BJ (cell line): ENCODE measurements at regions of chr12 and their contacts with region 1.

Region 1: DNA sequence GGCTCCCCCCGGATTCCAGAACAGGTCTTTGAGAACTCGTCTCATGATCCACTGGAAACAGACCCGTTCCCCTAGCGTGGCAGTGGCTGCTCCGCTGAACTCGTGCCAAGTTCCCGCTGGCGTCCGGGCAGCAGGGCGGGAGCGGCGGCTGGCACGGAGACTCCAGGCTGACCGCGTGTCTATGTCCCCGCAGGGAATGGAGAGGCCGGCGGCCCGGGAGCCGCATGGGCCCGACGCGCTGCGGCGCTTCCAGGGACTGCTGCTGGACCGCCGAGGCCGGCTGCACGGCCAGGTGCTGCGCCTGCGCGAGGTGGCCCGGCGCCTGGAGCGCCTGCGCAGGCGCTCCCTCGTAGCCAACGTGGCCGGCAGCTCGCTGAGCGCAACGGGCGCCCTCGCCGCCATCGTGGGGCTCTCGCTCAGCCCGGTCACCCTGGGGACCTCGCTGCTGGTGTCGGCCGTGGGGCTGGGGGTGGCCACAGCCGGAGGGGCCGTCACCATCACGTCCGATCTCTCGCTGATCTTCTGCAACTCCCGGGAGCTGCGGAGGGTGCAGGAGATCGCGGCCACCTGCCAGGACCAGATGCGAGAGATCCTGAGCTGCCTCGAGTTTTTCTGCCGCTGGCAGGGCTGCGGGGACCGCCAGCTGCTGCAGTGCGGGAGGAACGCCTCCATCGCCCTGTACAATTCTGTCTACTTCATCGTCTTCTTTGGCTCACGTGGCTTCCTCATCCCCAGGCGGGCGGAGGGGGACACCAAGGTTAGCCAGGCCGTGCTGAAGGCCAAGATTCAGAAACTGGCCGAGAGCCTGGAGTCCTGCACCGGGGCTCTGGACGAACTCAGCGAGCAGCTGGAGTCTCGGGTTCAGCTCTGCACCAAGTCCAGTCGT is 1.5 kb downstream of the APOLD1 start:
- DNase-seq: no peak
- H3K4me3 ChIP-seq: peak overlapping the region; percentile 54
- H3K27me3 ChIP-seq: no peaks in the 10 kb centered on the region
- CTCF ChIP-seq: no peak

Region 2: GRCh38 chr12:12819671-12820311 is 32.8 kb after region 1 on chr12:
- CTCF ChIA-PET with region 1: interaction called, 19 read pairs
- POLR2A ChIA-PET with region 1: no interaction called
- DNase-seq: peak; percentile 97
- H3K4me3 ChIP-seq: no peak overlapping the region
- H3K27me3 ChIP-seq: no peaks in the 10 kb centered on the region
- CTCF ChIP-seq: no peak

Region 3: GRCh38 chr12:12837025-12837872 is 50.3 kb after region 1 on chr12:
- CTCF ChIA-PET with region 1: interaction called, 16 read pairs
- POLR2A ChIA-PET with region 1: no interaction called
- DNase-seq: no peak
- H3K4me3 ChIP-seq: no peak overlapping the region
- H3K27me3 ChIP-seq: no peaks in the 10 kb centered on the region
- CTCF ChIP-seq: peak; percentile 65

Region 4: DNA sequence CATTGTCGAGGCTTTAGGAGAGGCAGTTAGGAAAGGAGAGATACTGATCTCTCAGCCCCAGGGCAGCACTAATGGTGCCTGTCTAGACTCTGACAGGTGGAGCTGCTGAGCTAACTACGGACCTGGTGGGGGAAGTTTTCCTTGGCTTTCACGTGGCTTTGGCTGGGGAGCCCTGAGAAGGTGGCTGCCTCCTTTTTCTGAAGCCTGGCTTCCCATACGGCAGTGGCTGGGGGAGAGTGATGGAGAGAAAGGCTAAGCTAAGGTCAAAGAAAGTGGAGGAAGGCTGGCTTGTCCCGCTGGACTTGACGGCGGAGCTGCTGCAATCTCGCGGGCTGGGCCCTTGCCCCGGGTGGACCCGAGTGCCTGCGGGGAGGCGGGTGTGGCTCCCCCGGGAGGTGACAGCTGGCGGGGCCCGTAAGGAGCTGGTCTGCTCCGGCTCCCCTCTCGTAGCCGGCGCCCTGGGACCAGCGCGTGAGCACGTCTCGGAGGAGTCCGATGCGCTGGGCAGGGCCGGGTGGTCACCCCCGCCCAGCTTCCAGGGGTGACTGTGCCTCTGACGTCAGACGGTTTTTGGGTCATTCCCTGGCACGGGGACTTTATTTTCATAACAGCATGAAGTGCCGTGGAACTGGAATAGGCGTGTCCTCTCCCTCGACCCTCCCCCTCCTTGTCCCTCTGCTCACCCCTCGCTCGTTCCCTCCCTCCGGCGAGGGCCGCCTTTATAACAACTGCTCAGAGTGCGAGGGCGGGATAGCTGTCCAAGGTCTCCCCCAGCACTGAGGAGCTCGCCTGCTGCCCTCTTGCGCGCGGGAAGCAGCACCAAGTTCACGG is 104.1 kb after region 1 on chr12 and contains the start of gene GPRC5A:
- CTCF ChIA-PET with region 1: interaction called, 11 read pairs
- POLR2A ChIA-PET with region 1: no interaction called
- DNase-seq: peak; percentile 96
- H3K4me3 ChIP-seq: peak within 1 kb of the TSS; percentile 66
- H3K27me3 ChIP-seq: no peaks in the 10 kb centered on the region
- CTCF ChIP-seq: peak; percentile 47
- polyA plus RNA-seq, gene GPRC5A: 230 and 241 TPM in 2 replicates

Region 5: DNA sequence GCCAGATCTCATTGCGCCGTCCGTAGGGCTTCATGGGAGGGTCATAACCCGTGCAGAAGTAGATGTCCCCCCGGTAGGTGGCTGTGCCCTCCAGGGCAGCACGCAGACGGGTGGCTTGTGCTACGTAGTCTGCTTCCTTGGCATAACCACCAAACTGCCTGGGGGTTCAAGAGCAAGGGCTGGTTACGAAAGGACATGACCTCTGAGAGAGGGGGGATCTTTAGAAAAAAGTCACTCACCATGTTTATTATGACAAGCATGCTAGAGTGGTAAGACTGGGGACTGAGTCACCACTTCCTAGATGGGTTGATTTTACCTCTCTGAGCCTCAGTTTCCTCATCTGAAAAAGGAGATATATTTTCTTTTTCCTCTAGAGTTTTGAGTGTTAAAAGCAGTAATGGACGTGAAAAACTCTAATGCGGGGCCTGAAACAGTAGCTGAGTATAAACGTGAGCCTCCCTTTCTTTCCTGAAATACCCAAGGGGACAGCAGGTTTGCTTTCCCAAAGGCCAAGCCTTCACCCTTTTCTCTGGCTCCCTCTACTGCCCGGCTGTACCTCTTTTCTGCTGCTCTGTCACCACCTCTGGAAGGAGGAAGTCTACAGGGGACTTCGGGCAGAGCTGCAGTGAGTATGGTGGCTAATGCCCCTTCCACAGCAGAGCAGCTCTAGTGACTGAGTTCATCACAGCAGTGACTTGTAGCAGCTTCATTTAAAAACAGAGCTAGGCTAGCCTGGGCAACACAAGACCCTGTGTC is 188.5 kb after region 1 on chr12:
- CTCF ChIA-PET with region 1: interaction called, 61 read pairs
- POLR2A ChIA-PET with region 1: no interaction called
- DNase-seq: no peak
- H3K4me3 ChIP-seq: no peak overlapping the region
- H3K27me3 ChIP-seq: no peaks in the 10 kb centered on the region
- CTCF ChIP-seq: peak; percentile 70

Region 6: DNA sequence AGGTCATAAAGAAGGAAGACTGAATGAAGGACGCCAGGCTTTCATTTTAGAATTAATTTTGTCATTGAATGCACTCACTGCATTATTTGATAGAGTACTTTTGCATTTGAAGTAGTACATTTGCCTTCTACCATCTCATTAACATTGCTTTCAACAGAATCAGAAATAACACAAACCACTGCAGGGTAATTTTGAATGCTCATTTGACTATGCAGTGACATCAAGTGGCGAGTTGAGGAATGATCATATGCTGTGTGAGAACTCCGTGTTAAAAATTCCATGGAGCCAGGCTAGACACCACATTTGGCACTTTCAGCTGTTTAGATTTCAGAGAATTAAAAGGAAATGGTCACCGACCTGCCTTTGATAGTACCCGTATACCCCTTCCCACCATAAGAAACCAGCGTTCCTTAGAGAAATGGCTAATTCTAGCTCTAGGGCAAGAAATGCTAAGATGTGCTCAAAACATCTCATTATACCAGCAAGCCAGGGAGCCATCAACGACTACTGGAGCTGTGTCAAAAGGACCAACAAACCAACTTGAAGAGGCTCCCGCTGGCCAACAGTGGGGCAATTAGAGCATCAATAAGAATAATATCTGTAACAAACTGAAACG is 196.6 kb after region 1 on chr12:
- CTCF ChIA-PET with region 1: interaction called, 61 read pairs
- POLR2A ChIA-PET with region 1: no interaction called
- DNase-seq: no peak
- H3K4me3 ChIP-seq: no peak overlapping the region
- H3K27me3 ChIP-seq: no peaks in the 10 kb centered on the region
- CTCF ChIP-seq: peak; percentile 73

Region 7: DNA sequence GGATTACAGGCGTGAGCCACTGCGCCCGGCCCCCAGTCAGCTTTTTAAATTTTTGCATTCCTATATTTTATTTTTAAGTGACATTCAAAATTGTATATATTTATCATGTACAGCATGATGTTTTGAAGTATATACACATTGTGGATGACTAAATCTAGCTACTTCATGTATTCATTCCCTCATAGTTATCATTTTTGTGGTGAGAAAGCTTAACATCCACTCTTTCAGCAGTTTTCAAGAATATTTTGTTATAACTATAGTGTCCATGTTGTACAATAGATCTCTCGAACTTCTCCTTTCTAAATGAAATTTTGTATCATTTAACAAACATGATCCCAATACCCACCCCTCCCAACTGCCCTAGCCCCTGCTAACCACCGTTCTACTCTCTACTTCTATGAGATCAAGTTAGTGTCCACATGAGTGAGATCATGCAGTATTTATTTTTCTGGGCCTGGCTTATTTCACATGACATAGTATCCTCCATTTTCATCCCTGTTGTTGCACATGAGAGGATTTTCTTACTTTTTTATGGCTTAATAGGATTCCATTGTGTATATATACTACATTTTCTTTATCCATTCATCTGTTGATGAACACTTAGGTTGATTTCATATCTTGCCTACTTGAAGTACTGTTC is 221.9 kb after region 1 on chr12:
- CTCF ChIA-PET with region 1: no interaction called
- POLR2A ChIA-PET with region 1: interaction called, 15 read pairs
- DNase-seq: no peak
- H3K4me3 ChIP-seq: no peak overlapping the region
- H3K27me3 ChIP-seq: no peaks in the 10 kb centered on the region
- CTCF ChIP-seq: no peak